Activated CD4-positive, alpha-beta T cell treated with anti-CD3 and anti-CD28 coated beads, Interleukin-2, amount 10 ng/mL, durations not matched to agents 24 days and 14 days (primary cell): ENCODE measurements at regions of chr11 and their contacts with region 1.

Region 1: DNA sequence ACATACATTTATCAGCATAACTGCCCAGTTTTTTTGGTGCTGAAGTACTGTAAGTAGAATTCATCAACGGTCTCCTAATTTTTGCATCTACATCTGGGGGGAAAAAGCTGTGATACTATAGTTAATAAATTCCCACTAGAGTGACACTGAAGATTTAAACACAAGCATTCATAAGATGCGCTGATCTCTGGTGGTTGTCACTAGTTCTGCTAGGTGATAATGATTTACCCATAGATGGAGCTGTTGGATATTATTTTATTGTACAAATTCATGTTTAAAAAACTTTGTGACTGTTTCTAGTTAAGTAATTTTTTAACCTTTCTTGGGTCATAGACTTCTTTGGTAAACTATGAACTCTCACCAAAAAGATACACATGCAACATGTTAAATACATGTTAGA is 106.6 kb downstream of the EMSY start:
- DNase-seq: no peak
- H3K4me3 Mint-ChIP-seq: no peak overlapping the region
- H3K27ac Mint-ChIP-seq: no peak overlapping the region
- H3K4me1 Mint-ChIP-seq: peaks cover 3% of the 10 kb centered on the region
- H3K27me3 Mint-ChIP-seq: no peaks in the 10 kb centered on the region

Region 2: GRCh38 chr11:76361374-76361773 is 190.0 kb before region 1 on chr11:
- intact Hi-C with region 1: no loop called
- DNase-seq: no peak
- H3K4me3 Mint-ChIP-seq: no peak overlapping the region
- H3K27ac Mint-ChIP-seq: no peak overlapping the region
- H3K4me1 Mint-ChIP-seq: peaks cover 15% of the 10 kb centered on the region
- H3K27me3 Mint-ChIP-seq: no peaks in the 10 kb centered on the region

Region 3: GRCh38 chr11:76680518-76681425 is 129.4 kb after region 1 on chr11:
- intact Hi-C with region 1: loop called (anchors 2 kb)
- DNase-seq: peak; percentile 91
- H3K4me3 Mint-ChIP-seq: no peak overlapping the region
- H3K27ac Mint-ChIP-seq: no peak overlapping the region
- H3K4me1 Mint-ChIP-seq: peaks cover 22% of the 10 kb centered on the region
- H3K27me3 Mint-ChIP-seq: peaks cover 5% of the 10 kb centered on the region

Region 4: DNA sequence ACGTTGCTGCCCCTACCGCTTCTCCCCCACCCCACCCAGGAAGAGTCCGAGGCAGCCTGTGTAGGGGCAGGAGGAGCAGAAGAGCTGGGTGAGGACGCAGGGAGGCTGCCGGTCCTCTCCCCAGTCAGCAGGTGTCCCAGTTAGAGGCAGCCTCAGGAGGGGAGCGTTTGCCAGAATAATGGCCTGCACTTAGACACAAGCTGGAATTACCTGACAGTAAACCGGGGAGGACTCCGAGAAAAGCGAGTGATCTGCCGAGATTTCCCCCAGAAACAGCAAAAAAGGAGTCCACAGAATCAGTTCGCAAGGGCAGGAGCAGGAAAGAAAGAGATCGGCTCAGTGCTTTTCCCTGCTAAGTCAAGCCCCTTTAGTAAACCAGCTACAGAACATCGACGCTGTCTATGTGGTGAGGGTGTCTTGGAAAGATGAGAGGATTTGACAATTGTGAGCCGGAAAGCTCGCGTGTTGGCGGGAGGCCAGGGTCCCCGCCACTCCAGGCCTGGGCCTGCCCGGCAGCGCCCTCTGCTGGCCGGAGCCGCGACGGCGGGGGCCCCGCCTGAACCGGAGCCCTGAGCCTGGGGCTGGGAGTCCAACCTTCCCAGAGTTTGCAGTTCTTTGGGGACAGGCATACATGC is 1494.6 kb after region 1 on chr11:
- intact Hi-C with region 1: no loop called
- DNase-seq: peak; percentile 94
- H3K4me3 Mint-ChIP-seq: peak overlapping the region; percentile 45
- H3K27ac Mint-ChIP-seq: no peak overlapping the region
- H3K4me1 Mint-ChIP-seq: peaks cover 11% of the 10 kb centered on the region
- H3K27me3 Mint-ChIP-seq: peaks cover 4% of the 10 kb centered on the region